Lower lobe of right lung (tissue), 2 donors: ENCODE measurements at regions of chr4 and their contacts with region 1.

Region 1: GRCh38 chr4:1693129-1693896 is 9.2 kb upstream of the FAM53A start:
- DNase-seq: peak; percentile 83
- ATAC-seq: peak; percentile 92 to 95
- H3K4me3 ChIP-seq: no peak overlapping the region
- H3K27ac ChIP-seq: no peak overlapping the region
- H3K4me1 ChIP-seq: peaks cover 6% of the 10 kb centered on the region
- H3K27me3 ChIP-seq: no peaks in the 10 kb centered on the region
- CTCF ChIP-seq: peak; percentile 96

Region 2: DNA sequence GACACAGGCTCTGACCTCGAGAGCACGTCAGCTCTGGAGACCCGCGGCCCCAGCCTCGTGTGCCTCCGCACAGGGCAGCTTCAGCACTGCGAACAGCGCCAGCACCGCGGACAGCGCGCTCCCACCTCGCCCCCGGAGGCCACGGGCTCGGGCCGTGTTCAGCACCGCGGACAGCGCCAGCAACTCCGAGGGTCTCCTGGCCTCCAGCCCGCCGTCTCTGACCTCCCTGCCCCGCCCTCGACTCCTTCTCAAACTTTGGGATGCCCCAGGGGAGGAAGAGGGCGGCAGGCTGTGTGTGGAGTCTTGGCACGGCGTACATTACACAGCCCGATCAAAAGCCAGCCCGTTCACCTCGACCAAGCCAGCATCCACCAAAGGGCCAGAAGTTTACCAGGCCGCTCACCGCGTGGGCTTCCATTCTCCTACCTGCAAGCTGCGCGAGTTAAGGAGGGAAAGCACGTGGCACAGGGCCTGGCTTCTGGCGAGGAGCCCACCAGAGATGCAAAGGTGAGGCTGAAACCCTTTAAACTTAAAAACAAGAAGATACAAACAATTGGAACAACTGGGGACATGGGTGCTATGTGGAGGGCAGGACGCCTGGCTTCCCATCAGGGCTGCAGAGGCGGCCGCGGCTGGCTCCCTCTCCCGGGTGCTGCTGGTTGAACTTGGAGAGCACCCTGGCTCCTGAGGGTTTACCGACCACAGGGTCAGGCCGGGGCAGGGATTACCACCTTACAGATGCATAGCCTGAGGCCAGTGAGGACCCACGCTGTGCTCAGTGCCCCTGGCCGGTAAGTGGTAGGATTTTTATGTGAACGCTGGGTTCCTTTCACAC is 282.6 kb before region 1 on chr4:
- intact Hi-C with region 1: no loop called
- DNase-seq: peak; percentile 52
- ATAC-seq: peak; percentile 52 to 73
- H3K4me3 ChIP-seq: no peak overlapping the region
- H3K27ac ChIP-seq: no peak overlapping the region
- H3K4me1 ChIP-seq: no peaks in the 10 kb centered on the region
- H3K27me3 ChIP-seq: peaks cover 94% of the 10 kb centered on the region
- CTCF ChIP-seq: no peak

Region 3: GRCh38 chr4:1726146-1726934 is 33.0 kb after region 1 on chr4:
- intact Hi-C with region 1: loop called (anchors 5 kb)
- DNase-seq: peak; percentile 92
- ATAC-seq: peak; percentile 76 to 78
- H3K4me3 ChIP-seq: no peak overlapping the region
- H3K27ac ChIP-seq: peak overlapping the region; percentile 78
- H3K4me1 ChIP-seq: peaks cover 62% of the 10 kb centered on the region
- H3K27me3 ChIP-seq: no peaks in the 10 kb centered on the region
- CTCF ChIP-seq: peak; percentile 99